ENCODE measurements at regions of chr9 and their contacts with region 1.

Region 1: GRCh38 chr9:35954942-35955546 is 2.9 kb downstream of the OR2S2 start:
- DNase-seq: peak; percentile 57
- H3K4me3 ChIP-seq: no peak overlapping the region
- CTCF ChIP-seq: peak; percentile 81

Region 2: DNA sequence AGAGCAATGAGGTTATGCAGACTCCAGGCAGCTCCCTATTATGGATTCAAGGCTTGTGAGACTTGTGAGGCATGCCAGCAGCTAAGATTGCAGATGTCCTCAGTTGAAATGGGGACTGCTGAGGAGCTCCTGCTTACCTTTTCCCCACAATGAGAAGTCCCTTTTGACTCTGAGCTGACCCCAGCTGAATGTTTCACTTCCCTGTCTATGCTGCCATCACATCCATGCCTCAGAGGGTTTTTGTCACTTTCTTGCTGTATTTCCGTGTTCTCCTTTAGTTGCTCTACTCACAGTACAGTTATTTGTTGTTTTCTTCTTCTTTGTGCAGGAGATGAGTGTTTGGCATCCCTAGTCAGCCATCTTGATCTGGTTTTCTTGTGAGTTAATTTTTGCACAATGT is 21.7 kb after region 1 on chr9:
- CTCF ChIA-PET with region 1: no interaction called
- POLR2A ChIA-PET with region 1: no interaction called
- DNase-seq: no peak
- H3K4me3 ChIP-seq: no peak overlapping the region
- CTCF ChIP-seq: no peak

Region 3: DNA sequence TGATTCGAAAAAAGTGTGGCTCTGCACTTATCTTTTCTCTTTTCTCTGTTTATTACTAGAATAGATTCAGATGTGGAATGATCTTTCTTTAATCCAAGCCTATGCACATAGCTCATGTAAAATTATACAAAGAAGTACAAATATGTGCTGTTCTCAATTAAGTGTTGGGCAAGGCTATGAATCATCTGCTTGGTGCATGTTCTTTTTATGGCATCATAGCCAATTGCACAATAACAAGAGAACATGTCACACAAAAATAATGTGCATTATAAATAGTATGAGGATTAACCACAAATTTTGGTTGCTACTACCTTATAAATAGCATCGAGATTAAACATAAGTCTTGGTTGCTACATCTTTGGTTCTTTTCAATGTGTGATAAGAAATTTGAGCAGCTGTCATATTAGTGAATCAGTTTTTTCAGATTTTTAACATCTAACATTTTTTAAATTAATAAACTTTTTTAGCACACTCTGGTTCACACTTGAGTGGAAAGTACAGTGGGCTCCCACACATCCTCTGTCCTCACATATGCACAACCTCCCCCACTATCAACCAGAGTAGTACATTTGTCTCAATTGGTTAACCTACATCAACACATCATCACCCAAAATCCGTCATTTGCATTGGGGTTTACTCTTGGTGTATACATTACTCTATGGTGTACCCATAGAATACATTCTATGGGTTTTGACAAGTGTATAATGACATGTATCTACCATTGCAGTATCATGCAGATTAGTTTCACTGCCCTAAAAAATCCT is 74.9 kb after region 1 on chr9:
- CTCF ChIA-PET with region 1: interaction called, 342 read pairs
- POLR2A ChIA-PET with region 1: interaction called, 7 read pairs
- DNase-seq: peak; percentile 94
- H3K4me3 ChIP-seq: no peak overlapping the region
- CTCF ChIP-seq: no peak

Region 4: GRCh38 chr9:36053971-36054370 is 98.9 kb after region 1 on chr9:
- CTCF ChIA-PET with region 1: interaction called, 13 read pairs
- POLR2A ChIA-PET with region 1: no interaction called
- DNase-seq: no peak
- H3K4me3 ChIP-seq: no peak overlapping the region
- CTCF ChIP-seq: no peak

Region 5: GRCh38 chr9:36091026-36091953 is 136.2 kb after region 1 on chr9:
- CTCF ChIA-PET with region 1: no interaction called
- POLR2A ChIA-PET with region 1: no interaction called
- DNase-seq: no peak
- H3K4me3 ChIP-seq: no peak overlapping the region
- CTCF ChIP-seq: no peak

Region 6: GRCh38 chr9:36110434-36110833 is 155.4 kb after region 1 on chr9:
- CTCF ChIA-PET with region 1: interaction called, 17 read pairs
- POLR2A ChIA-PET with region 1: no interaction called
- DNase-seq: no peak
- H3K4me3 ChIP-seq: no peak overlapping the region
- CTCF ChIP-seq: no peak

Region 7: GRCh38 chr9:36177571-36177970 is 222.5 kb after region 1 on chr9:
- CTCF ChIA-PET with region 1: no interaction called
- POLR2A ChIA-PET with region 1: no interaction called
- DNase-seq: no peak
- H3K4me3 ChIP-seq: no peak overlapping the region
- CTCF ChIP-seq: no peak

Measured in AG04449 (cell line).